CD4-positive, alpha-beta memory T cell (primary cell): ENCODE measurements at regions of chr14 and their contacts with region 1.

Region 1: DNA sequence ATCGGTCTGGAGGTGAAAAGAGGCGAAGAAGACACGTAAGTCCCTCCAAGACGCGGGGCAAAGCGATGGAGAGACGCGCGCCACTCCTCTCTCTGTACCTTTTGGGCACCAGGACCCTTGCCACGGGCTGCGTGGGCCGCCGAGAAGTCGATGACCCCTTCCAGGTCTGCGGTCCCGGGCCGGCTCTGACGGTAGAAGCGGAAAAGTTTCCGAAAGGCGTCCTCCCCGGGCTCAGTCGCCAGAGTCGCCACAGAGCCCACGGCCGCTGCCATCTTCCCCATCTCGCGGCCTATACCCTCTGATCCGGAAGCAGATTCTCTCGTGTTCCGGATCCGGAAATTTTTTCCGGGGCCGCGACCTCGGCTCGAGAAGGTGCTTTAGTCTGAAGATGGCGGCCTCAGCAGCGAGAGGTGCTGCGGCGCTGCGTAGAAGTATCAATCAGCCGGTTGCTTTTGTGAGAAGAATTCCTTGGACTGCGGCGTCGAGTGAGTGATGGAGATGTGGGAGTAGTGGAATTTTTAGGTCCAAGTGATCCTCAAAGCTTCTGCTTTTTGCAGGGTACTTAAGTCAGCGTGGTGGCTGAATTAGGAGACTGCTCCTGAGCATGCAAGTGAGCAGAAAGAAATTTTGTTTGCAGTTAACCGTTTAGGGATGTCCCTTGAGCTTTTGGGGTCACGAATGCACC is at the starts of genes ALKBH1 and SLIRP:
- DNase-seq: peak; percentile 87 to 91 (median 87)
- H3K4me3 ChIP-seq: peak within 1 kb of the TSS; percentile 90 to 97
- H3K4me3 Mint-ChIP-seq: peak within 1 kb of the TSS; percentile 95 to 100 (median 98)
- H3K27ac ChIP-seq: peak within 1 kb of the TSS; percentile 80
- H3K27ac Mint-ChIP-seq: peak within 1 kb of the TSS; percentile 83 to 99 (median 96)
- H3K4me1 ChIP-seq: peaks cover 33% of the 10 kb centered on the region
- H3K4me1 Mint-ChIP-seq: peaks cover 26 to 49% (median 38%) of the 10 kb centered on the region in 4 donors
- H3K27me3 ChIP-seq: no peaks in the 10 kb centered on the region
- H3K27me3 Mint-ChIP-seq: no peaks in the 10 kb centered on the region
- total RNA-seq, gene ALKBH1: 16.2 to 20.1 TPM
- total RNA-seq, gene SLIRP: 37.5 to 40.6 TPM

Region 2: GRCh38 chr14:77376771-77377501 is 330.9 kb before region 1 on chr14 and contains the starts of genes SAMD15 and TMED8:
- CTCF ChIA-PET with region 1: interaction called, 3 read pairs
- POLR2A ChIA-PET with region 1: interaction called, 3 read pairs
- intact Hi-C with region 1: loop called (anchors 10 kb)
- DNase-seq: peak; percentile 81 to 87 (median 87)
- H3K4me3 ChIP-seq: peak within 1 kb of the TSS; percentile 94 to 97
- H3K4me3 Mint-ChIP-seq: peak within 1 kb of the TSS; percentile 85 to 94 (median 90)
- H3K27ac ChIP-seq: peak within 1 kb of the TSS; percentile 74
- H3K27ac Mint-ChIP-seq: peak within 1 kb of the TSS in 6 of 7 donors; percentile 84 to 95 (median 92)
- H3K4me1 ChIP-seq: peaks cover 46% of the 10 kb centered on the region
- H3K4me1 Mint-ChIP-seq: peaks cover 30 to 42% (median 36%) of the 10 kb centered on the region in 4 donors
- H3K27me3 ChIP-seq: no peaks in the 10 kb centered on the region
- H3K27me3 Mint-ChIP-seq: no peaks in the 10 kb centered on the region
- total RNA-seq, gene SAMD15: 0.11 to 0.38 TPM
- total RNA-seq, gene TMED8: 8.3 to 8.6 TPM

Region 3: GRCh38 chr14:77603654-77604255 is 104.1 kb before region 1 on chr14:
- CTCF ChIA-PET with region 1: no interaction called
- POLR2A ChIA-PET with region 1: no interaction called
- intact Hi-C with region 1: loop called (anchors 5 kb)
- DNase-seq: no peak
- H3K4me3 ChIP-seq: no peak overlapping the region
- H3K4me3 Mint-ChIP-seq: peak overlapping the region in 3 of 8 donors; percentile 0 to 15 (median 9)
- H3K27ac ChIP-seq: no peak overlapping the region
- H3K27ac Mint-ChIP-seq: peak overlapping the region in 5 of 7 donors; percentile 5 to 66 (median 48)
- H3K4me1 ChIP-seq: peaks cover 60% of the 10 kb centered on the region
- H3K4me1 Mint-ChIP-seq: peaks cover 43 to 76% (median 60%) of the 10 kb centered on the region in 4 donors
- H3K27me3 ChIP-seq: no peaks in the 10 kb centered on the region
- H3K27me3 Mint-ChIP-seq: no peaks in the 10 kb centered on the region

Region 4: GRCh38 chr14:77760381-77761246 is 52.7 kb after region 1 on chr14 and contains the start of gene SNW1:
- CTCF ChIA-PET with region 1: interaction called, 3 read pairs
- POLR2A ChIA-PET with region 1: interaction called, 15 read pairs
- intact Hi-C with region 1: loop called (anchors 1 kb)
- DNase-seq: peak; percentile 89 to 94 (median 92)
- H3K4me3 ChIP-seq: peak within 1 kb of the TSS; percentile 94 to 98
- H3K4me3 Mint-ChIP-seq: peak within 1 kb of the TSS; percentile 95 to 98 (median 97)
- H3K27ac ChIP-seq: peak within 1 kb of the TSS; percentile 99
- H3K27ac Mint-ChIP-seq: peak within 1 kb of the TSS; percentile 97 to 100 (median 98)
- H3K4me1 ChIP-seq: peaks cover 52% of the 10 kb centered on the region
- H3K4me1 Mint-ChIP-seq: peaks cover 23 to 63% (median 39%) of the 10 kb centered on the region in 4 donors
- H3K27me3 ChIP-seq: no peaks in the 10 kb centered on the region
- H3K27me3 Mint-ChIP-seq: no peaks in the 10 kb centered on the region
- total RNA-seq, gene SNW1: 92.1 to 99.7 TPM

Region 5: DNA sequence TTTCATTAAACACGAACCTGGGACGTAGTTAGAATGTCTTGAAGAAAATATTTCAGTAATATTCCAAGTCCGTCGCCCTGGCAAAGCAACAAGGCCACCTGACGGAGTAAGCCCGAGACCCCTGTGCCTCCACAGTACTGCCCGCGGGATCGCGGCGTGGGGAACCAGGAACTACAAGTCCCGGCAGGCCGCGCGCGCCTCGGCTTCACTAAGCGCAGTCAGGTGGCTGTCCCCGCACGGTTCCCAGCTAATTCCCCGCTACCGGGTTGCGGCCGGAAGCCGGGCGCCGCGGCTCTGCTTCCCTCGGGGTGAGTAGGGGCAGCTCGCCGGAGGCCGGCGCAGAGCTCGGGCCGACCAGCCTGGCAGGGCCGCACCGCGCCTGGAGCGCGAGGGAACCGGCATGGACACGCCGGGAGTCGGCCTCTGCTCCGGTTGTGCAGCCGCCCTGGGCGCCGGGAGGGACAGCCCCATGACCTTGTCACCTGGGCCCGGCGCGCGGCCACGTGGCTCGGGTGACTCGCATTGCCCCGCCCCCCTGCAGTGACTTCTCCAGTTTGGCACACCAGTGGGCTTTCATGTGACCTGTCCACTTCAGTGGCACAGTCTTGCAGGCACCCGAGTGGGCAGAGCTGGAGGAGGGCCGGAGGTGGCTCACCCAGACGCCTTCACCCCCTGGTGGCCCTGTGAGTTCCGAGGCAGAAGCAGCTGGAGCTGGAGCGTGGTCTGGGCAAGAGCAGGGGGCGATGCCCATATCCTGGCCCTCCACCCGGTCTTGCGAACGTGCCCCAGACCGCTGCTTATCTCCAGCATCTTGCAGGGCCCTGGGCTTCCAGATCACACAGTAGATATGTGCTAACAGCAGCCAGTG is 92.2 kb after region 1 on chr14 and contains the start of gene ADCK1:
- CTCF ChIA-PET with region 1: no interaction called
- POLR2A ChIA-PET with region 1: interaction called, 4 read pairs
- intact Hi-C with region 1: loop called (anchors 1 kb)
- DNase-seq: peak; percentile 83 to 88 (median 85)
- H3K4me3 ChIP-seq: peak within 1 kb of the TSS; percentile 83 to 87
- H3K4me3 Mint-ChIP-seq: peak within 1 kb of the TSS; percentile 83 to 90 (median 86)
- H3K27ac ChIP-seq: peak within 1 kb of the TSS; percentile 71
- H3K27ac Mint-ChIP-seq: peak within 1 kb of the TSS; percentile 77 to 93 (median 91)
- H3K4me1 ChIP-seq: peaks cover 7% of the 10 kb centered on the region
- H3K4me1 Mint-ChIP-seq: peaks cover 2 to 11% (median 9%) of the 10 kb centered on the region in 4 donors
- H3K27me3 ChIP-seq: no peaks in the 10 kb centered on the region
- H3K27me3 Mint-ChIP-seq: no peaks in the 10 kb centered on the region
- total RNA-seq, gene ADCK1: 5.3 to 5.6 TPM

Region 6: DNA sequence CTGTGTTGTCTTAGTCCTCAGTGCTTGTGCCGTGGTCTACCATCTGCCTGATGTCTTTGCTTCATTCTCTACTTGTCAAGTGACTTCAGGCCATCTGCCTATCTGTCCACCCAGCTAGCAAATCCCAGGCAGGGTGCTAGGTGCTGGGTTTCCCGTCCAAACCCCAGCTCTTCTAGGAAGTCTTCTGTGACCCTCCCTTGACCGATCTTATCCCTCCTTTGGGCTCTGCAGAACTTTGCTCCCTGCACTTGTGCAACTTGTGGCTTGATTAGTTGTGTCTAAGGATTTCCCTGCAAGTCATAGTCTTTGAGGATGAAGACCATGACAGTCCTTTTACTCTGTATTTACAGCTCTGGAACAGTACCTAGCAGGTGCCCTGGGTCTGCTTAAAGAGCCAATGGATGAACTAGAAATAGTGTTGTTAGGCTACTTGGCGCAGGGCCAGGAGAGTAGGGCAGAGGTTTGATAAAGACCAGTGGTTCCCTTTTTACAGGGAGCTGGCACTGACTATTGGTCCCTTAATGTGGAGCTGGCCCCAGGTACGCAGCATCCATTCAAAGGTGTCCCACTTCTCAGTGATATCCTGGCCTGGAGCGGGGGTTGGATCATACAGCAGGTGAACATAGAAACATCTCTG is 152.2 kb after region 1 on chr14:
- CTCF ChIA-PET with region 1: no interaction called
- POLR2A ChIA-PET with region 1: no interaction called
- intact Hi-C with region 1: no loop called
- DNase-seq: no peak
- H3K4me3 ChIP-seq: no peak overlapping the region
- H3K4me3 Mint-ChIP-seq: no peak overlapping the region
- H3K27ac ChIP-seq: no peak overlapping the region
- H3K27ac Mint-ChIP-seq: peak overlapping the region in 1 of 7 donors; percentile 53
- H3K4me1 ChIP-seq: no peaks in the 10 kb centered on the region
- H3K4me1 Mint-ChIP-seq: no peaks in the 10 kb centered on the region
- H3K27me3 ChIP-seq: no peaks in the 10 kb centered on the region
- H3K27me3 Mint-ChIP-seq: peaks cover 0 to 2% of the 10 kb centered on the region in 2 donors